Right ventricle myocardium inferior (tissue), 1 donor: ENCODE measurements at regions of chr6 and their contacts with region 1.

Region 1: GRCh38 chr6:41505122-41506049 is 40.8 kb upstream of the FOXP4 start:
- DNase-seq: peak; percentile 85
- ATAC-seq: peak; percentile 88

Region 2: GRCh38 chr6:41545703-41546474 is 40.5 kb after region 1 on chr6 and contains the start of gene FOXP4:
- intact Hi-C with region 1: loop called (anchors 5 kb)
- DNase-seq: peak; percentile 93
- ATAC-seq: peak; percentile 91
- total RNA-seq, gene FOXP4: 13.9 TPM

Region 3: DNA sequence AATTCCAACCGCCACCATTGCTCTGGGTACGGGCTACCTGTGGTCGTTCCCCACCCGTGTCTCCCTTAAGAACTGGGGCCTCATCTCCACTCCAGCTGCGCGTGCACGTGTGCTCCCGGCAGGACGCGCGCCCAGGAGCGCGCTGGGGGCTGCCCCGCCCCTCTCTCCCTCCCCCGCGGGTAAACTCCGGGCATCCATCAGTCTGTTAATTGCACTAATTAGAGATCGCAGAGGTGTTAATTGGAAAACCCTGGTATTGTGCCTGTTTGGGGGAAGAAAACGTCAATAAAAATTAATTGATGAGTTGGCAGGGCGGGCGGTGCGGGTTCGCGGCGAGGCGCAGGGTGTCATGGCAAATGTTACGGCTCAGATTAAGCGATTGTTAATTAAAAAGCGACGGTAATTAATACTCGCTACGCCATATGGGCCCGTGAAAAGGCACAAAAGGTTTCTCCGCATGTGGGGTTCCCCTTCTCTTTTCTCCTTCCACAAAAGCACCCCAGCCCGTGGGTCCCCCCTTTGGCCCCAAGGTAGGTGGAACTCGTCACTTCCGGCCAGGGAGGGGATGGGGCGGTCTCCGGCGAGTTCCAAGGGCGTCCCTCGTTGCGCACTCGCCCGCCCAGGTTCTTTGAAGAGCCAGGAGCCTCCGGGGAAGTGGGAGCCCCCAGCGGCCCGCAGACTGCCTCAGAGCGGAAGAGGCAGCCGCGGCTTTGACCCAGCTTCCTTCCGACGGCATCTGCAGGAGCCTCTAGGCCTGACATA is 55.2 kb after region 1 on chr6:
- intact Hi-C with region 1: loop called (anchors 5 kb)
- DNase-seq: peak; percentile 89
- ATAC-seq: peak; percentile 87